ENCODE measurements at regions of chr6 and their contacts with region 1.

Region 1: DNA sequence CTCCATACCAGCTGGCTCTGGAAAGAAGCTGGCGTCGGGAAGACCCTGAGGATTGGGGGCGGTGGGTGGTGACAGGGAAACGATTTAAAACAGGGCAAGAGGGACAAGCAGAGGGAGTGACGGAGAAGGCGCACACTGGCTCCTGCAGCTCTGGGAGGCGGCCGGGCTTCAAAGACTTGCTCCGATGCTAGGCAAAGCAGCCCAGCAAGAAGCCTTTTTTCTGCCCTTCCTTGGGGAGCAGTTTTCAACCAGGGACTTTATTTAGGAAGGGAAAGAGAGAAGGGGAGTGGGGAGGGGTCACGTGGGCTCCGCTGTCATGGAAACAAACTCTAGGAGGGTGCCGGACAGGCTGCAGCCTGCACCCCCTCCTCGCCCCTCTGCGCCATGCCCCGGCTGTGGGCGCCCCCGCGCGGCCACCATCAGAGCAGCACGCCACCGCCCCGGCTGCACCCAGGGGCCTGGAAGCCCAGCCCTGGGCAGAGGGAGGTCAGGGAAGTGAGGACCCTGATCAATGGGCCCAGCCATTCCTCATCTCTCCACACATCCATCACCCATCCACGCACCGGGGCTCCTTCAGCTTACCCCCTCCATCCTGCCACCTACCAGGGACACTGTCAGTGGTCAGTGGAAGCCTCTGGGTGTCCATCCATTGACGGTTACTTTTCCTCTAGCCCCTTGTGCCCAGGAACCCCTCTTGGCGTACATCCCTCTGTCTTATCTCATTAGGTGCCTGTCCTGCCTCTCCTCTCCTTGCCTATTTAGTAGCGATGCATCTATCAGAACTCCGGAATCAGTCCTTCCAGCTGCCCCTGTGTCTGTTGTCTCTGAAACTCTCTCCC is 66.6 kb upstream of the CCDC167 start:
- DNase-seq: peak; percentile 76
- ATAC-seq: peak; percentile 93
- H3K4me3 Mint-ChIP-seq: no peak overlapping the region
- H3K27ac Mint-ChIP-seq: no peak overlapping the region
- H3K4me1 Mint-ChIP-seq: no peaks in the 10 kb centered on the region
- H3K27me3 Mint-ChIP-seq: peaks cover 14% of the 10 kb centered on the region

Region 2: GRCh38 chr6:37483917-37484785 is 82.2 kb before region 1 on chr6:
- CTCF ChIA-PET with region 1: interaction called, 20 read pairs
- DNase-seq: peak; percentile 76
- ATAC-seq: peak; percentile 88
- H3K4me3 Mint-ChIP-seq: no peak overlapping the region
- H3K27ac Mint-ChIP-seq: no peak overlapping the region
- H3K4me1 Mint-ChIP-seq: peaks cover 15% of the 10 kb centered on the region
- H3K27me3 Mint-ChIP-seq: no peaks in the 10 kb centered on the region

Region 3: DNA sequence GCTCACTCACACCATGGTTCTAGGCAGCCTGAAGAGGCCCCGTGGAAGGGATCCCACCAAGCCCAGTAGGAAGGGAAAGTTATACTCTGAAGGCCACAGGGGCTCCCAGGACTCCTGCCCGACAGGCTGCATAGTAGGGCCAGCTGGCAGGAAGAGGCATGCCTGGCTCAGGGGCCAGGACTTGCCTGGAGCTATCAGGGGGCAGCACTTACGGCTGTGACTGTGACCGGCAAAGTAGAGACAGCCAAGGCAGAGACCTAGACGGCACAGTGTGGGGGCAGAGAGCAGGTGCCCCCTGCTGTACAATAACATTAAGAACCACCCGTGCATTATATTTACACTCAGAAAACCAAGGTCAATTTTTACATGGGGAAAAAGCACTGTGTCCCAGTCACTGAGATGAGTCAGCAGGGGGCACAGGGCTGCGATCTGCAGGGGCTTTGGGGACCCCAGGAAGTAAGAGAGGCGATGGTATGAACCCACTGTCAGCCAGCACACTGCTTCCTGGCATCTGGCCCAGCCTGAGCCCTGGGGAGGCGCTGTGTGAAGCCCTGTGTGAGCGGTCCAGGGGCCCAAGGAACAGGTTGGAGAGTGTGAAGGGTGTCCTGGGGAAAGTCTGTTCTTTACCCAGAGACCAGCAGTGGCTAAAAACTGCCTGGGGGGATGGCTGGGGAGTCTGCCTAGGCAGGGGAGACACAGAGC is 76.5 kb before region 1 on chr6:
- CTCF ChIA-PET with region 1: interaction called, 20 read pairs
- DNase-seq: no peak
- ATAC-seq: peak; percentile 52
- H3K4me3 Mint-ChIP-seq: no peak overlapping the region
- H3K27ac Mint-ChIP-seq: peak overlapping the region; percentile 77
- H3K4me1 Mint-ChIP-seq: peaks cover 52% of the 10 kb centered on the region
- H3K27me3 Mint-ChIP-seq: no peaks in the 10 kb centered on the region

Region 4: DNA sequence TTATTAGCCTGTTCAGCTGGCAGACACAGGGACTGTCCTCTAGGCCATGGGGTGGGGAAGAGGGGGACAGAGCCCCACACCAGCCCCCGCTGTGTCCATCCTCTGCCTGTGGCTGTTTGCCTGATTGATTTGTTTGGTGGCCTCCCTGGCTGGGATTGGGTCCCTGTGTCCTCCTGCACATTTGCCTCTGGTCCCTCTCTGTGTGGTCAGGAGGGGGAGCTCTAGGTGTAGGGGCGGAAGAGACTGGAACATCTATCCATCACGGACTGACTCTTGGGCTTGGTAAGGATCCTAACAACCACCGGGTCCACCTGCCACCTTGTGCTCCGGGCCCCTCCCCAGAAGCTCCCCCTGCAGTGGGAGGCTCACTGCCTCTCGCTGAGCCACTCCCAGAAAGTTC is 28.2 kb before region 1 on chr6:
- CTCF ChIA-PET with region 1: interaction called, 20 read pairs
- DNase-seq: no peak
- ATAC-seq: no peak
- H3K4me3 Mint-ChIP-seq: no peak overlapping the region
- H3K27ac Mint-ChIP-seq: no peak overlapping the region
- H3K4me1 Mint-ChIP-seq: peaks cover 5% of the 10 kb centered on the region
- H3K27me3 Mint-ChIP-seq: peaks cover 38% of the 10 kb centered on the region

Region 5: GRCh38 chr6:37547564-37548061 is 18.7 kb before region 1 on chr6:
- CTCF ChIA-PET with region 1: interaction called, 16 read pairs
- DNase-seq: peak; percentile 61
- ATAC-seq: peak; percentile 74
- H3K4me3 Mint-ChIP-seq: peak overlapping the region; percentile 3
- H3K27ac Mint-ChIP-seq: peak overlapping the region; percentile 85
- H3K4me1 Mint-ChIP-seq: peaks cover 25% of the 10 kb centered on the region
- H3K27me3 Mint-ChIP-seq: no peaks in the 10 kb centered on the region

Region 6: GRCh38 chr6:37576336-37576813 is 10.0 kb after region 1 on chr6:
- CTCF ChIA-PET with region 1: interaction called, 10 read pairs
- DNase-seq: no peak
- ATAC-seq: no peak
- H3K4me3 Mint-ChIP-seq: no peak overlapping the region
- H3K27ac Mint-ChIP-seq: no peak overlapping the region
- H3K4me1 Mint-ChIP-seq: no peaks in the 10 kb centered on the region
- H3K27me3 Mint-ChIP-seq: no peaks in the 10 kb centered on the region

Region 7: DNA sequence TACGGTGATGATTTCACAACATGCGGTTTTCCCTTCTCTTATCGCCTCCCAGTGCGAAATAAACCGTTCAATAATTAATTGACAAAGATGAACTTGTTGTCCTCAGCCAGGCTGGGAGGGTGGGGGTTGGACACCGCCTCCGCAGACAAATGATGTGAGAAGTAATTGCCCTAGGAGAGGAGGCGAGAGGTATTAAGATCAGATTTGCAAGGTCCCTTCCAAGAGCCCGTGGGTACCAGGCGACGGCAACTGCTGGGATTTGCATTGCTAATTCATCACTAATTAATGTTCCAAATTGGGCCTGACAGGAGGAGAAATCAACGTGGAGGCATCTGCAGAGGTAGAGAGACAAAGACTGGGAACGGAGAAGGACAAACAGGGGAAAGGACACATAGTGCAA is 23.6 kb after region 1 on chr6:
- CTCF ChIA-PET with region 1: no interaction called
- DNase-seq: no peak
- ATAC-seq: no peak
- H3K4me3 Mint-ChIP-seq: no peak overlapping the region
- H3K27ac Mint-ChIP-seq: no peak overlapping the region
- H3K4me1 Mint-ChIP-seq: no peaks in the 10 kb centered on the region
- H3K27me3 Mint-ChIP-seq: no peaks in the 10 kb centered on the region

Region 8: DNA sequence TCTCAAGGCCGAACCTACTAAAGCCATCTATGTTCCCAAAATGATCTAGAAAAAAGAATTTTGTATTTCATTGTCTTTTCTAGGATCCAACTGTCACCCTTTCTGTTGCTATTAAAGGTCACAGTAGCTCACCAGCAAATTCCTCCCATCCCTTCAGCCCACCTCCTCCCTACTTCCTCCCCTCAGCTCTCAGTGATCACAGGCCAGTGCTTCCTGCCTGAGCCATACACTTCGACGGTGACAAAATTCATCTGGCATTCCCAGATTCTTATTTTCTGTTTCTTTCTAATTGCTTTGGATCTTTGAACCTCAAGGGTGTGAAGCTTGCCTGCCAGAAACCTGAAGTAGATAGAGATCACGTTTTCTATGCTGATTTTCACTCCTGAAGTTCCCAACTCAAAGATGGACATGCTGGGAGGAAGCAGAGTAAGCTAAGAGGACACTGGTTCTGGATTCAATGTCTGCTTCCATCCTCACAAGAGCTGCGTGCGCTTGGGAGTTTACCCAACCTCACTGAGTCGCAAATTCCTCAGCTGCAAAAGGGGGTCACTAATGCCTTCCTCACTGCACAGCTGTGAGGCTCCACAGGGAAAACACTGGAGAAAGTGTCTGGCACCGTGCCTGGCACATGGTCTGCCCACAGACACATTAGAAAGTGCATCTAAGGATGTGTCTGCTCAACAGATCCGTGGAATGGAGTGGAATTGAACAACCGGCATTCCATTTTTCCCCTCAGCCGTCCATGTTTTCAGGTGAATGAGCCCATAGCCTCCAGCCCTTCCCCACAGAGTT is 96.9 kb after region 1 on chr6:
- CTCF ChIA-PET with region 1: no interaction called
- DNase-seq: no peak
- ATAC-seq: no peak
- H3K4me3 Mint-ChIP-seq: no peak overlapping the region
- H3K27ac Mint-ChIP-seq: no peak overlapping the region
- H3K4me1 Mint-ChIP-seq: no peaks in the 10 kb centered on the region
- H3K27me3 Mint-ChIP-seq: peaks cover 5% of the 10 kb centered on the region

Region 9: DNA sequence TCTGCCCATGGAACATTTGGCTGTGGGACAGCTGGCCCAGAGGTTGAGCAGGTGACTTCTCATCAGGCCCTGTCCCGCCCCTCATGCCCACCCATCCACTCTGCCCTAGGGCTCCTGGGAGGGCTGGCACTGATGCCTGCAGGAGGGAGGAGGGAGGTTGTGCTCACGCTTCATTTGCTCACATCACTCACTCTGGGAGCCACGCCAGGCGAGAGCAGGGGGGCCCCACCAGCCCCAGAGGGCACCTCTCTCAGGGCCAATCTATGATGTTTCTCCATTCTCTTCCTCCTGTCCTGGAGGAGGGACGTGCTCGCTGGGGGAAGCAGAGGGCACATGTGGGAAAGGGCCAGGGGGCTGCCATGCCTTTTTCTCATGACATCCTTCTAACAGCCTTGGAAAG is 1471.4 kb after region 1 on chr6:
- CTCF ChIA-PET with region 1: no interaction called
- DNase-seq: no peak
- ATAC-seq: no peak
- H3K4me3 Mint-ChIP-seq: no peak overlapping the region
- H3K27ac Mint-ChIP-seq: no peak overlapping the region
- H3K4me1 Mint-ChIP-seq: peaks cover 8% of the 10 kb centered on the region
- H3K27me3 Mint-ChIP-seq: peaks cover 52% of the 10 kb centered on the region